H1 (cell line): ENCODE measurements at regions of chr3 and their contacts with region 1.

Region 1: GRCh38 chr3:157201648-157202278 is 41.8 kb upstream of the CCNL1 start:
- DNase-seq: no peak
- H3K4me3 ChIP-seq: no peak overlapping the region
- H3K27ac ChIP-seq: no peak overlapping the region
- H3K4me1 ChIP-seq: no peaks in the 10 kb centered on the region
- H3K27me3 ChIP-seq: no peaks in the 10 kb centered on the region
- CTCF ChIP-seq: peak in 2 of 3 experiments; percentile 16 to 47; a peak in 2 of 4 replicates
- EP300 ChIP-seq: no peak
- POLR2A ChIP-seq: no peak
- RAD21 ChIP-seq: peak; percentile 46 to 47

Region 2: DNA sequence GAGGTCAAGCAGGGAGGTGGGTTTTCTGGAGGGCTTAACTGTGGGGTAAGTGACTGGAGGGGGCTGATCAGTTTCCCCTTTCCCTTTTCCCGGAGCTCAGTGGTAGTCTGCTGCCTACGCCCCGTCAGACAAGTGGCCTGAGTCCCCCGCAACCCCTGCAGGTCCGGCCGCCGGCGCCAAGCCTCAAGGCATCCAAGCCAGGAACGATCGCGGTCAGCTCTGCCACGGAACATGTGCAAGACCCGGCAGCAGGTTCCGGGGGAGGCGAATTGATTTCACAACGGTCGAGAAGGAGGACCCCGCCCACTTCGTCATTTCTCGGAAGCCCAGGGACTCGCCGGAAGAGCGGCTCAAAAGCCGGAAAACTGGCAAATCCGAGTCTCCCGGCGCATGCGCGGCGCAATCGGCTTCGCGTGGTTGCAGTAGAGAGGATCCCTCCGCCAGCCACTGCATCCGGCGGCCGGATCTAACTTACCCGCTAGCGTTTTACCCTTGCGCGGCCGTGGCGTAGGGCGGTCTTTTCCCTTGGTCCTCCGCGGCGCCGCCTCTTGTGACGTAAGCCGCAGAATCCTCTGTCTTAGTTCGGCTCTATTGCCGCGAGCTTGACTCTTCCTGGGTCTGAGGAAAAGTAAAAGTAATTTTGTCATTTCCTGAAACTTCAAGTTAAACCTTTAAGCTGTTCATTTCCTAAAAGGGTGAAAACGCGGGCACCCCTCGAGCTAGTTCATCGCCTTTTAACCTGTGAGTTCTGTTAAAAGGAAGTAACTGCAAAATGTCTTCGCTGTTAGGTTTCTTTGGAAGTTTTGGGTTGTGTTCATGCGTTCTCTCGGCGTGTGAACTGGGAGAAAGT is 26.9 kb before region 1 on chr3:
- CTCF ChIA-PET with region 1: interaction called, 27 read pairs
- POLR2A ChIA-PET with region 1: interaction called, 8 read pairs
- DNase-seq: peak; percentile 91 to 99
- H3K4me3 ChIP-seq: peak overlapping the region; percentile 64 to 86 (median 74)
- H3K27ac ChIP-seq: peak overlapping the region; percentile 68; the same call in 1 of the 2 replicates
- H3K4me1 ChIP-seq: peaks cover 0 to 3% (median 0%) of the 10 kb centered on the region in 4 experiments; a peak in 1 of 7 replicates
- H3K27me3 ChIP-seq: no peaks in the 10 kb centered on the region
- CTCF ChIP-seq: no peak
- EP300 ChIP-seq: peak; percentile 6 to 77
- POLR2A ChIP-seq: peak; percentile 24 to 95
- RAD21 ChIP-seq: 0 out of 4 replicates have a peak, but pooled peaks of 1 of the 2 experiments have one; percentile 0

Region 3: GRCh38 chr3:157190388-157190872 is 11.3 kb before region 1 on chr3:
- CTCF ChIA-PET with region 1: interaction called, 13 read pairs
- POLR2A ChIA-PET with region 1: no interaction called
- DNase-seq: no peak
- H3K4me3 ChIP-seq: no peak overlapping the region
- H3K27ac ChIP-seq: no peak overlapping the region
- H3K4me1 ChIP-seq: no peaks in the 10 kb centered on the region
- H3K27me3 ChIP-seq: no peaks in the 10 kb centered on the region; a peak in 1 of 7 replicates
- CTCF ChIP-seq: no peak
- EP300 ChIP-seq: no peak
- POLR2A ChIP-seq: no peak
- RAD21 ChIP-seq: no peak

Region 4: GRCh38 chr3:157231071-157231470 is 29.3 kb after region 1 on chr3:
- CTCF ChIA-PET with region 1: interaction called, 16 read pairs
- POLR2A ChIA-PET with region 1: no interaction called
- DNase-seq: no peak
- H3K4me3 ChIP-seq: no peak overlapping the region
- H3K27ac ChIP-seq: no peak overlapping the region
- H3K4me1 ChIP-seq: no peaks in the 10 kb centered on the region
- H3K27me3 ChIP-seq: no peaks in the 10 kb centered on the region
- CTCF ChIP-seq: no peak
- EP300 ChIP-seq: no peak
- POLR2A ChIP-seq: no peak
- RAD21 ChIP-seq: no peak

Region 5: GRCh38 chr3:157330206-157330605 is 128.4 kb after region 1 on chr3:
- CTCF ChIA-PET with region 1: interaction called, 10 read pairs
- POLR2A ChIA-PET with region 1: no interaction called
- DNase-seq: no peak
- H3K4me3 ChIP-seq: no peak overlapping the region
- H3K27ac ChIP-seq: no peak overlapping the region
- H3K4me1 ChIP-seq: peaks cover 0 to 5% (median under 1%) of the 10 kb centered on the region in 4 experiments; a peak in 5 of 7 replicates
- H3K27me3 ChIP-seq: no peaks in the 10 kb centered on the region
- CTCF ChIP-seq: no peak
- EP300 ChIP-seq: no peak
- POLR2A ChIP-seq: no peak
- RAD21 ChIP-seq: no peak

Region 6: GRCh38 chr3:157354722-157355121 is 153.0 kb after region 1 on chr3:
- CTCF ChIA-PET with region 1: interaction called, 44 read pairs
- POLR2A ChIA-PET with region 1: no interaction called
- DNase-seq: peak in 1 of 2 experiments; percentile 67
- H3K4me3 ChIP-seq: no peak overlapping the region
- H3K27ac ChIP-seq: no peak overlapping the region
- H3K4me1 ChIP-seq: peaks cover 0 to 4% (median 0%) of the 10 kb centered on the region in 4 experiments; a peak in 1 of 7 replicates
- H3K27me3 ChIP-seq: no peaks in the 10 kb centered on the region
- CTCF ChIP-seq: peak in 2 of 3 experiments; percentile 48 to 82; a peak in 3 of 4 replicates
- EP300 ChIP-seq: no peak
- POLR2A ChIP-seq: no peak
- RAD21 ChIP-seq: peak; percentile 59 to 63